Activated CD4-positive, alpha-beta T cell treated with anti-CD3 and anti-CD28 coated beads, Interleukin-2, amount 10 ng/mL, durations not matched to agents 7 days and 5 days (primary cell): ENCODE measurements at regions of chr11 and their contacts with region 1.

Region 1: DNA sequence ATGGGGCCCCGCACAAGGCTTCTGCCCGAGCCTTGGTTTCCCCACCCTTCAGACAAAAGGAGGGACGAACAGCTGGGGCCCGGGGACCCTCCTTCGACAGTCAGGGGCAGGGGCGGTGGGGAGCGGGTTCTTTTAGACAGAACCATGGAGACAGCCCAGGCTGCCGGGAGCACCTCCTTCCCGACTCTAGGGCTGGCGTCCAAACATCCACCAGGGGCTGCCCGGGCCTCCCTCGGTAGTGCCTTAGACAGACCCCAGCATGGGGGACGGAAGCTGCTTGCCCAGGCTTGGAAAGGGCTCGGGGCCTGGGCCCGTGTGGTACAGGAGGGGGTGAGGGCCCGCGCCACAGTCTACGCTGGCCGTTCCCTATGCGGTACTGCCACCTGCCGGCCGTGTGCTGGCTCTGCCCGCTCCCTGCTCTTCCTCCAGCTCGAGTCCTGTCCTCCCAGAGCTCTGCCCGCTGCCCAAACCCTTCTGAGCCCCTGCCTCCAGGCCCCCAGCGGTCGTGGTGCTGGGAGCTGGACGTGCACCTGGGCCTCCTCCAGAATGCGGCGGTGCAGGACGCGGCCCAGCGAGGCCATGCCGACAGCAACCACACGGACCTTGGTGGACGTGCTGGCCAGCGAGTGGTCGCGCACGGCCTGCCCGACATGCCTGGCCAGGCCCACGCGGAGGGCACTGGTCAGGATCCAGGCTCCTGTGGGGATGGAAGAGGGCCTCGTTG is 20.1 kb downstream of the TSSC4 start:
- DNase-seq: peak; percentile 66
- H3K4me3 Mint-ChIP-seq: no peak overlapping the region
- H3K27ac Mint-ChIP-seq: no peak overlapping the region
- H3K4me1 Mint-ChIP-seq: no peaks in the 10 kb centered on the region
- H3K27me3 Mint-ChIP-seq: no peaks in the 10 kb centered on the region

Region 2: GRCh38 chr11:2196970-2197770 is 223.5 kb before region 1 on chr11:
- CTCF ChIA-PET with region 1: interaction called, 22 read pairs
- POLR2A ChIA-PET with region 1: no interaction called
- DNase-seq: peak; percentile 80
- H3K4me3 Mint-ChIP-seq: no peak overlapping the region
- H3K27ac Mint-ChIP-seq: no peak overlapping the region
- H3K4me1 Mint-ChIP-seq: peaks cover 4% of the 10 kb centered on the region
- H3K27me3 Mint-ChIP-seq: peaks cover 8% of the 10 kb centered on the region

Region 3: DNA sequence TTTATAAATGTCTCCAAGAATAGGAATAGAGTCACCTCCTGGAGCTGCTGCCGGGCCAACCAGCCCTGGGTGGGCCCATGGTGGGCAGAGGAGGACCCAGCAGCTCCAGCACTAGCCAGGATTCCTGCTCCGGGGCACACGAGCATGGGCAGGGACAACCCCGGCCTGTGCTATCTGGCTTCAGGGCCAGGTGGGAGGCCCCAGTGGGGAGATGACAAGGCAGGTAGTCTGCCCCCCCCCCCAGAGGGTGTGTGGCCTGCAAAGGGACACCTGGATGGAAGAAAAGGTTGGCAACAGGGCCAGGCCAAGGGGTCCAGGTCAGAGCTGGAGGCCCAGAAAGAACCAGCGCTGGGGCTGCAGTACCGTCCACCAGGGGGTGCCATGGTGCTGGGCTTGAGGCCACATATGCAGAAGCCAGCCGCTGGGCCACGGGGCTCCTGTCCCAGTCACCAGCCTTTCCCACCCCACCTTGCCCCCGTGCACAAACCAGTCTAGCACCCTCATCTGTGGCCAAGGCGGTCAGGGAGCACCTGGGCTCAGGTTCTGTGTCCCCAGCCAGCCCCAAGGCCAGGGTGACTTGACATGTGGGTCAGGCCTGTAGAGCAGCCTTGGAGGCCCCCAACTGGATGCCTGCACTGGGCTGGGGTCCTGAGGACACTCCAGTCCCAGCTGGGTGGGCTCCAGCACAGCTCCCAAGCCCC is 115.4 kb before region 1 on chr11:
- CTCF ChIA-PET with region 1: interaction called, 134 read pairs
- POLR2A ChIA-PET with region 1: no interaction called
- DNase-seq: peak; percentile 71
- H3K4me3 Mint-ChIP-seq: peak overlapping the region; percentile 96
- H3K27ac Mint-ChIP-seq: peak overlapping the region; percentile 96
- H3K4me1 Mint-ChIP-seq: peaks cover 47% of the 10 kb centered on the region
- H3K27me3 Mint-ChIP-seq: no peaks in the 10 kb centered on the region

Region 4: DNA sequence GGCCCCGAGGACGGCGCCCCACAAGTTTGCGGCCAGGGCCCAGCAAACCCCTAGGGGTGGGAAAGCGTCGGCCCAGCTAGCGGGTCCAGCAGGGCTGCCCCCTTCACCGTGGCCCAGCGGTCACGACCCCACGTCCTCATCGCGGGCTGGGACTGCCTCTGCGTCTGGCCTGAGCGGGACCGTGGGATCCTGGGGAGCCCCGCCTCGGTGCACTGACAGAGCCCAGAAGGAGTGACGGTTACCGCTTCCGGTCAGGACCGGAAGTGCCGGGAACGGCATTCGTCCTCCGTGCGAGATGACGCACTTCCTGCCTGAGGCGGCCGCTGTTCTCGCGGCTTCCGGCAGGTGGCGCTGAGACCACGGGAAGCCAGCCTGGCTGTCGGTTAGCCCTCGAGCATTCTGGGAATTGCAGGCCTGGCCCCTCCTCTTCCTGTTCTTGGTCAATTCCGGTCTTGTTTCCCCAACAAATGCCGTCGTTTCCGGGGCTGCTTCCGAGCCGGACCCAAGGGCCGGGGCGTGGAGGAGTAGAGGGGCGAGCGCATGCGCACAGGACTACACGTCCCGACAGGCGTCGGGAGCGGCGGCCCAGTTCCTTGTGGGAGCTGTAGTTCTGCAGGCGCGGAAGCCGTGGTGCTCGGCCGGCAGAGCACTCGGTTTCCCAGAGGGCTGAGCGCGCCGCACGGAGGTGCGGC is 20.4 kb before region 1 on chr11 and contains the start of gene TSSC4:
- CTCF ChIA-PET with region 1: interaction called, 21 read pairs
- POLR2A ChIA-PET with region 1: no interaction called
- DNase-seq: peak; percentile 99
- H3K4me3 Mint-ChIP-seq: peak within 1 kb of the TSS; percentile 91
- H3K27ac Mint-ChIP-seq: peak within 1 kb of the TSS; percentile 91
- H3K4me1 Mint-ChIP-seq: peaks cover 22% of the 10 kb centered on the region
- H3K27me3 Mint-ChIP-seq: no peaks in the 10 kb centered on the region
- total RNA-seq, gene TSSC4: 31.1 to 47.5 TPM

Region 5: GRCh38 chr11:2532704-2533586 is 112.3 kb after region 1 on chr11:
- CTCF ChIA-PET with region 1: interaction called, 88 read pairs
- POLR2A ChIA-PET with region 1: no interaction called
- DNase-seq: peak; percentile 93
- H3K4me3 Mint-ChIP-seq: peak overlapping the region; percentile 54
- H3K27ac Mint-ChIP-seq: peak overlapping the region; percentile 81
- H3K4me1 Mint-ChIP-seq: peaks cover 23% of the 10 kb centered on the region
- H3K27me3 Mint-ChIP-seq: no peaks in the 10 kb centered on the region